ENCODE measurements at regions of chr3 and their contacts with region 1.

Region 1: GRCh38 chr3:155995525-155996351 is 124.6 kb upstream of the KCNAB1 start:
- DNase-seq: peak; percentile 54
- ATAC-seq: peak; percentile 97
- H3K4me3 ChIP-seq: no peak overlapping the region
- H3K27ac ChIP-seq: no peak overlapping the region
- H3K4me1 ChIP-seq: peaks cover 0 to 5% of the 10 kb centered on the region in 2 experiments; a peak in 1 of 4 replicates
- H3K27me3 ChIP-seq: no peaks in the 10 kb centered on the region
- CTCF ChIP-seq: peak; percentile 56 to 70 (median 66)
- POLR2A ChIP-seq: no peak
- RAD21 ChIP-seq: peak; percentile 78

Region 2: DNA sequence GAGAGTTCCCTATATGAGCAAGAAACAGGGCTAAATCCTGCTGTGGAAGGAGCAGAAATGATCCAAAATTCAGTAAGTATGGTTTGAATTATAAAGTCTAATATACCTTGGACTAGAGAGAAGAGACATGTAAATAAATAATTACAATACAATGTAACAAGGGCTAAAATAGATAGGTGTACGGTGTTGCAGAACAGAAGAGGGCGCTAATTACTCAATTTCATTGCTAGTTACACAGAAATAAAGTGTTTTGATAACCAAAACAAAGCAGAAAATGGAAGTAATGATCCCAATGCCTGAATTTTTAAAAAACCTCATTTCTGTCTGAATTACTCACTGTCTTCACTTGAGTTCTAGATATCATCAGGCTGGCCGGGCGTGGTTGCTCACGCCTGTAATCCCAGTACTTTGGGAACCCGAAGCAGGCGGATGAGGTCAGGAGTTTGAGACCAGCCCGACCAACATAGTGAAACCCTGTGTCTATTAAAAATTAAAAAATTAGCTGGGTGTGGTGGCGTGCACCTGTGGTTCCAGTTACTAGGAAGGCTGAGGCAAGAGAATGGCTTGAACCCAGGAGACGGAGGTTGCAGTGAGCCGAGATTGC is 242.6 kb before region 1 on chr3:
- CTCF ChIA-PET with region 1: no interaction called
- POLR2A ChIA-PET with region 1: no interaction called
- RAD21 ChIA-PET with region 1: no interaction called
- intact Hi-C with region 1: loop called (anchors 5 kb)
- DNase-seq: no peak
- ATAC-seq: peak; percentile 81
- H3K4me3 ChIP-seq: no peak overlapping the region
- H3K27ac ChIP-seq: no peak overlapping the region
- H3K4me1 ChIP-seq: peaks cover 0 to 8% of the 10 kb centered on the region in 2 experiments; a peak in 3 of 4 replicates
- H3K27me3 ChIP-seq: no peaks in the 10 kb centered on the region
- CTCF ChIP-seq: peak; percentile 47 to 74 (median 74); a peak in 5 of 6 replicates
- POLR2A ChIP-seq: no peak
- RAD21 ChIP-seq: peak; percentile 79

Region 3: DNA sequence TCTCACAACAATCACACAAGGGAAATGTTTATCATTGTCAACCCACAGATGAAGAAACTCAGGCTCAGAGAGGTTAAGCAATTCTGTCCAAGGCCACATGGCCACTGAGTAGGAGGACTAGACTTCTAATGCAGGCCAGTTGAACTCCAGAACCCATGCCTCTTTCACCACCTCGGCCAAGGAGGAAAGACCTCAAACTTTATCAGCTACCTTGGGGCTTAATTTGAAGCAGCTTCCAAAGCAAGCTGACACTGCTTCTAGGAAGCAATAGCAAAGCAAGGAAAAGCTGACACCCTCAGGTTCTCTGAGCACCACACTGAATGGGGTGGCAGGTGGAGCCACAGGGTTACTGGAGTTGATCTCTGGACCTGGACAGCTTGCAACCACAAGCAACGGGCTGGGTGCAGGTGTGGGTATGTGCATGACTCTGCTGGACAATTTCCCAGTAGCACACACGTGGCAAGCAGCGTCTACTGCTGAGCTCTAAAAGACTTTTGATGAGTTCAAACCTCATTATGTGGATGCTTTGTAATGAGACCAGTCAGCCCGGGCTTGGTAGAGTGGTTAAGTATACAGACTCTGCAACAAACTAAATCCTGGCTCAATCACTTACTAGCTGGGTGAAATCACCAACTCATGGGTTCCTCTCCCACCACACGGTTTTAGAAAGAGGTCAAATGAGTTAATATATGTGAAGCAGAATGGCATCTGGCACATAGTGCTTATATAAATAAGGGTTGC is 1141.1 kb after region 1 on chr3:
- CTCF ChIA-PET with region 1: interaction called, 3 read pairs
- POLR2A ChIA-PET with region 1: no interaction called
- RAD21 ChIA-PET with region 1: no interaction called
- intact Hi-C with region 1: loop called (anchors 5 kb)
- DNase-seq: no peak
- ATAC-seq: peak; percentile 42
- H3K4me3 ChIP-seq: no peak overlapping the region
- H3K27ac ChIP-seq: no peak overlapping the region
- H3K4me1 ChIP-seq: peaks cover 3 to 43% of the 10 kb centered on the region in 2 experiments
- H3K27me3 ChIP-seq: no peaks in the 10 kb centered on the region
- CTCF ChIP-seq: no peak
- POLR2A ChIP-seq: no peak
- RAD21 ChIP-seq: no peak

Measured in HCT116 (cell line).